ENCODE measurements at regions of chr12 and their contacts with region 1.

Region 1: DNA sequence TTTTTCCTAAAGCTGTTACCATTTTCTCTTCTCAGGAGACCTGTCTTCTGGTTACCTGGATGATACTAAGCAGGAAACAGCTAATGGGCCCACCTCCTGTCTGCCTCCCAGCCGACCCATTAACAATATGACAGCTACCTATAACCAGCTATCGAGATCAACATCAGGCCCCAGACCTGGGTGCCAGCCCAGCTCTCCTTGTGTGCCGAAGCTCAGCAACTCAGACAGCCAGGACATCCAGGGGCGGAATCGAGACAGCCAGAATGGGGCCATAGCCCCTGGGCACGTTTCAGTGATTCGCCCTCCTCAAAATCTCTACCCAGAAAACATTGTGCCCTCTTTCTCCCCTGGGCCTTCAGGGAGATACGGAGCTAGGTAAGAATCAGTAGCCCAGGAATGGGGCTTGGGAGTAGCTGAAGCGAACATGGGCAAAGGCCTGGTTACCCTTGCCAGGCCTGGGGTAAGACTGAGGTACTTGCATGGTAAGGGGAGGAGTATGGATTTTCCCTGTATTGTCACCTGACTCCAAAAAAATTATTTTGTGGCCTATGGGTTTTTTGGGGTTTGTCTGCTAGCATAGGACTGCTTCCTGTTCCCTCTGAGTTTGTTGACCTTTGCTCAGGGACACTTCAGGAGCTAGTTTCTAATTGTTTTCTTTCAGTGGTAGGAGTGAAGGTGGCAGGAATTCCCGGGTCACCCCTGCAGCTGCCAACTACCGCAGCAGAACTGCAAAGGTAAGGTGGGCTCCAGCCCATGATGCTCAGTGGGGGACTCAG is 26.6 kb downstream of the TRAFD1 start:
- DNase-seq: no peak
- H3K4me3 ChIP-seq: no peak overlapping the region
- H3K27ac ChIP-seq: no peak overlapping the region
- H3K4me1 ChIP-seq: peaks cover 0 to 5% (median 2%) of the 10 kb centered on the region in 4 donors
- H3K27me3 ChIP-seq: no peaks in the 10 kb centered on the region
- CTCF ChIP-seq: no peak
- EP300 ChIP-seq: no peak
- POLR2A ChIP-seq: no peak

Region 2: DNA sequence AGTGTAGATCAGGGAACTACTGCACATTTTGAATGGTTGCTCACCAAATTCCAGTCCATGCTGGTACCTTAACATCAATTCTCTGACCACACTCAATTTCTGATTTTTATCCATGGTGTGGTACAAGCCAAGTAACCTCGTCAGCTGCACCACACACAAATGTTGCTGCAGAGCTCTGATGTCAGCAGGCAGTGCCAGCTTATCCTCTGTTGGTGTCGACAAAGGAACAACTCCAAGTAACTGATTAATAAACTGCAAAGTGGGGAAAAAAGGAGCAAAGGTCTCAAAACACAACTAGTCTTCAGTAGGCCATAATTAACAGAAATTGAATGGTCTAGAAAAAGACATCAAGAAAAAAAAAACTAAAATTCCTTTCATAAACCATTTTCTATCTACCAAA is 90.8 kb before region 1 on chr12:
- intact Hi-C with region 1: loop called (anchors 10 kb)
- DNase-seq: no peak
- H3K4me3 ChIP-seq: no peak overlapping the region
- H3K27ac ChIP-seq: no peak overlapping the region
- H3K4me1 ChIP-seq: no peaks in the 10 kb centered on the region
- H3K27me3 ChIP-seq: no peaks in the 10 kb centered on the region
- CTCF ChIP-seq: no peak
- EP300 ChIP-seq: no peak
- POLR2A ChIP-seq: no peak

Measured in sigmoid colon (tissue), 7 donors.